ENCODE measurements at regions of chr3 and their contacts with region 1.

Region 1: GRCh38 chr3:183555541-183556081 is at the start of gene KLHL6:
- DNase-seq: peak; percentile 81
- ATAC-seq: peak; percentile 83
- H3K4me3 ChIP-seq: peak within 1 kb of the TSS; percentile 67 to 92 (median 82)
- H3K4me3 Mint-ChIP-seq: peak within 1 kb of the TSS; percentile 94
- H3K27ac ChIP-seq: peak within 1 kb of the TSS; percentile 79 to 87
- H3K27ac Mint-ChIP-seq: peak within 1 kb of the TSS; percentile 99
- H3K4me1 ChIP-seq: peaks cover 39 to 50% of the 10 kb centered on the region in 2 donors
- H3K4me1 Mint-ChIP-seq: peaks cover 51% of the 10 kb centered on the region
- H3K27me3 ChIP-seq: no peaks in the 10 kb centered on the region
- H3K27me3 Mint-ChIP-seq: no peaks in the 10 kb centered on the region
- CTCF ChIP-seq: no peak
- total RNA-seq, gene KLHL6: 69.7 and 72.6 TPM in 2 replicates

Region 2: GRCh38 chr3:183392186-183393034 is 163.2 kb before region 1 on chr3:
- CTCF ChIA-PET with region 1: no interaction called
- POLR2A ChIA-PET with region 1: no interaction called
- intact Hi-C with region 1: no loop called
- DNase-seq: no peak
- ATAC-seq: no peak
- H3K4me3 ChIP-seq: no peak overlapping the region
- H3K4me3 Mint-ChIP-seq: no peak overlapping the region
- H3K27ac ChIP-seq: no peak overlapping the region
- H3K27ac Mint-ChIP-seq: no peak overlapping the region
- H3K4me1 ChIP-seq: no peaks in the 10 kb centered on the region
- H3K4me1 Mint-ChIP-seq: no peaks in the 10 kb centered on the region
- H3K27me3 ChIP-seq: peaks cover 0 to 8% (median 3%) of the 10 kb centered on the region in 4 experiments
- H3K27me3 Mint-ChIP-seq: peaks cover 33% of the 10 kb centered on the region
- CTCF ChIP-seq: no peak

Region 3: GRCh38 chr3:183427876-183428446 is 127.7 kb before region 1 on chr3:
- CTCF ChIA-PET with region 1: no interaction called
- POLR2A ChIA-PET with region 1: no interaction called
- intact Hi-C with region 1: no loop called
- DNase-seq: no peak
- ATAC-seq: peak; percentile 44
- H3K4me3 ChIP-seq: peak overlapping the region in 4 of 5 experiments; percentile 54 to 74 (median 62)
- H3K4me3 Mint-ChIP-seq: peak overlapping the region; percentile 90
- H3K27ac ChIP-seq: no peak overlapping the region
- H3K27ac Mint-ChIP-seq: no peak overlapping the region
- H3K4me1 ChIP-seq: peaks cover 13 to 18% of the 10 kb centered on the region in 2 donors
- H3K4me1 Mint-ChIP-seq: peaks cover 11% of the 10 kb centered on the region
- H3K27me3 ChIP-seq: peaks cover 0 to 53% (median 23%) of the 10 kb centered on the region in 4 experiments
- H3K27me3 Mint-ChIP-seq: peaks cover 29% of the 10 kb centered on the region
- CTCF ChIP-seq: no peak

Region 4: GRCh38 chr3:183468424-183468823 is 87.2 kb before region 1 on chr3:
- CTCF ChIA-PET with region 1: interaction called, 37 read pairs
- POLR2A ChIA-PET with region 1: interaction called, 8 read pairs
- intact Hi-C with region 1: loop called (anchors 1 kb)
- DNase-seq: no peak
- ATAC-seq: no peak
- H3K4me3 ChIP-seq: no peak overlapping the region
- H3K4me3 Mint-ChIP-seq: no peak overlapping the region
- H3K27ac ChIP-seq: no peak overlapping the region
- H3K27ac Mint-ChIP-seq: no peak overlapping the region
- H3K4me1 ChIP-seq: peaks cover 0 to 7% of the 10 kb centered on the region in 2 donors
- H3K4me1 Mint-ChIP-seq: peaks cover 10% of the 10 kb centered on the region
- H3K27me3 ChIP-seq: no peaks in the 10 kb centered on the region
- H3K27me3 Mint-ChIP-seq: peaks cover 7% of the 10 kb centered on the region
- CTCF ChIP-seq: no peak

Region 5: GRCh38 chr3:183490670-183491069 is 64.9 kb before region 1 on chr3:
- CTCF ChIA-PET with region 1: interaction called, 21 read pairs
- POLR2A ChIA-PET with region 1: interaction called, 7 read pairs
- intact Hi-C with region 1: no loop called
- DNase-seq: no peak
- ATAC-seq: no peak
- H3K4me3 ChIP-seq: no peak overlapping the region
- H3K4me3 Mint-ChIP-seq: no peak overlapping the region
- H3K27ac ChIP-seq: no peak overlapping the region
- H3K27ac Mint-ChIP-seq: peak overlapping the region; percentile 41
- H3K4me1 ChIP-seq: peaks cover 0 to 6% of the 10 kb centered on the region in 2 donors
- H3K4me1 Mint-ChIP-seq: peaks cover 7% of the 10 kb centered on the region
- H3K27me3 ChIP-seq: no peaks in the 10 kb centered on the region
- H3K27me3 Mint-ChIP-seq: no peaks in the 10 kb centered on the region
- CTCF ChIP-seq: no peak

Region 6: GRCh38 chr3:183527428-183528379 is 27.9 kb before region 1 on chr3:
- CTCF ChIA-PET with region 1: interaction called, 10 read pairs
- POLR2A ChIA-PET with region 1: interaction called, 3 read pairs
- intact Hi-C with region 1: no loop called
- DNase-seq: peak; percentile 73
- ATAC-seq: peak; percentile 73
- H3K4me3 ChIP-seq: peak overlapping the region in 2 of 5 experiments; percentile 6 to 12
- H3K4me3 Mint-ChIP-seq: peak overlapping the region; percentile 83
- H3K27ac ChIP-seq: peak overlapping the region; percentile 44 to 63
- H3K27ac Mint-ChIP-seq: peak overlapping the region; percentile 93
- H3K4me1 ChIP-seq: peaks cover 36 to 54% of the 10 kb centered on the region in 2 donors
- H3K4me1 Mint-ChIP-seq: peaks cover 77% of the 10 kb centered on the region
- H3K27me3 ChIP-seq: no peaks in the 10 kb centered on the region
- H3K27me3 Mint-ChIP-seq: no peaks in the 10 kb centered on the region
- CTCF ChIP-seq: no peak

Region 7: DNA sequence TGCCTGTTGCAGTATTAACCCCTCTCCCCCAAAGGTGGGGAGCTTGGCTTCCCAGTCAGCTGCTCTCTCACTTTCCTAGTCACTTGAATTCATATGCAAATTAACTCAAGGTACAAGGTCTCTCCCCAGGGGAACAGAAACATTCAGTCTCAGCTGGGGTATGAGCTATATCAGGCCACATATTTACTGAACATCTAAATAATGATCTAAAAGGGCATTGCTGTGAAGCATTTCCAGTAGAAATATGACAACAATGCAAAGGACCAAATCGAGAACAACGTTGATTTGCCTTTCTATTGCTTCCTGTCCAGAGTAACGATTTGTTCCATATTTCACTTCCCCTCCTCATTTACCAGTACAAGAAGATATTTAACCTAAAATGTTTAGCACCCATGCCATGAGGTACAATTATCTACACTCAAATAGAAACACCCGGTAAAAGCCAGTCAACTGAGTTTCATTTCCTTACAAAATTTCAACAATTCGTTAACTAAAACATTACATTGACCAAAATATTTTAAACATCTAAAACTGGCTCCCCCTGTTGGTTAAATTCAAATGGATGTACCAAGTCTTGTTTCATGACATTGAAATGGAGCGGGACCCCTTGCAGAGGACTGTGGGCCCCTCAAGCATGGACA is 36.4 kb after region 1 on chr3:
- CTCF ChIA-PET with region 1: interaction called, 3 read pairs
- POLR2A ChIA-PET with region 1: no interaction called
- intact Hi-C with region 1: loop called (anchors 5 kb)
- DNase-seq: peak; percentile 77
- ATAC-seq: peak; percentile 76
- H3K4me3 ChIP-seq: peak overlapping the region in 1 of 5 experiments; percentile 16
- H3K4me3 Mint-ChIP-seq: peak overlapping the region; percentile 56
- H3K27ac ChIP-seq: no peak overlapping the region
- H3K27ac Mint-ChIP-seq: peak overlapping the region; percentile 15
- H3K4me1 ChIP-seq: peaks cover 32 to 49% of the 10 kb centered on the region in 2 donors
- H3K4me1 Mint-ChIP-seq: peaks cover 47% of the 10 kb centered on the region
- H3K27me3 ChIP-seq: peaks cover 0 to 28% (median 5%) of the 10 kb centered on the region in 4 experiments
- H3K27me3 Mint-ChIP-seq: peaks cover 15% of the 10 kb centered on the region
- CTCF ChIP-seq: peak; percentile 71

Region 8: GRCh38 chr3:183697610-183698317 is 142.2 kb after region 1 on chr3 and contains the start of gene YEATS2:
- CTCF ChIA-PET with region 1: no interaction called
- POLR2A ChIA-PET with region 1: interaction called, 3 read pairs
- intact Hi-C with region 1: loop called (anchors 5 kb)
- DNase-seq: peak; percentile 82
- ATAC-seq: peak; percentile 87
- H3K4me3 ChIP-seq: peak within 1 kb of the TSS; percentile 77 to 92 (median 83)
- H3K4me3 Mint-ChIP-seq: peak within 1 kb of the TSS; percentile 97
- H3K27ac ChIP-seq: peak within 1 kb of the TSS; percentile 67 to 82
- H3K27ac Mint-ChIP-seq: peak within 1 kb of the TSS; percentile 91
- H3K4me1 ChIP-seq: peaks cover 18% of the 10 kb centered on the region in 2 donors
- H3K4me1 Mint-ChIP-seq: peaks cover 32% of the 10 kb centered on the region
- H3K27me3 ChIP-seq: no peaks in the 10 kb centered on the region
- H3K27me3 Mint-ChIP-seq: no peaks in the 10 kb centered on the region
- CTCF ChIP-seq: no peak
- total RNA-seq, gene YEATS2: 26.7 and 30.6 TPM in 2 replicates